Aorta (tissue), 5 donors: ENCODE measurements at regions of chr6 and their contacts with region 1.

Region 1: DNA sequence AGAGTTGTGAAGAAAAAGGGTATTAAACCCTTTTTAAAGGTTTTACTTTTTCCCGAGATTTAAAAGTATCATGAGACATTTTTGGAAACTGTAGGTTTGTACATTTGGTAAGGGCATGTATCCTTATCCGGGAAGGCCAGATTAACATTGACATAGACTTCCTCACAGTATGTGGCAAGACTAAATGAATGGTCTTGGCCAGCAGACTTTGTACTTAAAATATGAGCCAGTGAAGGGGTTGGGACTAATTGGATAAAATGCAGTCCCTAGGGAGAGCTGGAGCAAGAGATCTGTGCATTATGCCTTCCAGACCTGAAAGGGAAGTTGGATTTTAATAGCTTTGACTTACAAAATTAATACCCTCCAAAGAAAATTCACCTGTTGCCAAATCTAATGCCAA is 60.4 kb upstream of the CCN2 start:
- DNase-seq: no peak
- ATAC-seq: peak; percentile 77
- H3K4me3 ChIP-seq: peak overlapping the region in 1 of 2 donors; percentile 10
- H3K27ac ChIP-seq: peak overlapping the region; percentile 63 to 93
- H3K4me1 ChIP-seq: peaks cover 3 to 9% of the 10 kb centered on the region in 2 donors
- H3K27me3 ChIP-seq: no peaks in the 10 kb centered on the region

Region 2: GRCh38 chr6:132063738-132064137 is 52.2 kb after region 1 on chr6:
- intact Hi-C with region 1: loop called in 1 of 2 experiments (anchors 10 kb)
- DNase-seq: no peak
- ATAC-seq: no peak
- H3K4me3 ChIP-seq: no peak overlapping the region
- H3K27ac ChIP-seq: no peak overlapping the region
- H3K4me1 ChIP-seq: peaks cover 0 to 3% of the 10 kb centered on the region in 2 donors
- H3K27me3 ChIP-seq: no peaks in the 10 kb centered on the region

Region 3: DNA sequence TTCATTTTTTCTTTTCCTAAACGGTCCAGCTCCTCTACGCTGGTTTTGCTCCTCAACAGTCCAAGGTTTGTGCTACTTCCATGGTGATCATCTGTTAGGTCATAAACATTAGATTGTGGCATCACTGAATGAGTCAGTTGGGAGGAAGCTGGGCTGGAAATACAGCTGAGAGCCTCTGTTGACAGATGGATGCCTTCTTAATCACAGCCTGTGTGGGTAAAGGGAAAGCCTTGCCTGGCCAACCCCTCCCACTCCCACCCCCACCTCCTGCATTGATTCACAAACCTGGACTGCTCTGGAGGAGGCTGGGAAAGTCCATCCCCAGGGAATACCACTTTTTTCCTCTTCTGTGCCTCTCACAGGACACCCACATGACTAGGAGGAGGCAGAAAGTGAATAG is 120.2 kb after region 1 on chr6:
- intact Hi-C with region 1: loop called in 1 of 2 experiments (anchors 5 kb)
- DNase-seq: peak; percentile 70 to 81
- ATAC-seq: peak; percentile 84
- H3K4me3 ChIP-seq: no peak overlapping the region
- H3K27ac ChIP-seq: peak overlapping the region; percentile 84 to 98
- H3K4me1 ChIP-seq: peaks cover 0 to 9% of the 10 kb centered on the region in 2 donors
- H3K27me3 ChIP-seq: no peaks in the 10 kb centered on the region